Heart right ventricle (tissue), 16 donors: ENCODE measurements at regions of chr18 and their contacts with region 1.

Region 1: GRCh38 chr18:74353169-74353775 is 37.6 kb downstream of the C18orf63 start:
- DNase-seq: peak; percentile 23 to 78
- ATAC-seq: peak; percentile 87 to 94 (median 90)
- H3K4me3 ChIP-seq: no peak overlapping the region
- H3K27ac ChIP-seq: no peak overlapping the region
- H3K4me1 ChIP-seq: peaks cover 0 to 17% (median 5%) of the 10 kb centered on the region in 9 donors
- H3K27me3 ChIP-seq: peaks cover 0 to 3% (median 0%) of the 10 kb centered on the region in 7 donors
- CTCF ChIP-seq: peak; percentile 59 to 91 (median 82)

Region 2: DNA sequence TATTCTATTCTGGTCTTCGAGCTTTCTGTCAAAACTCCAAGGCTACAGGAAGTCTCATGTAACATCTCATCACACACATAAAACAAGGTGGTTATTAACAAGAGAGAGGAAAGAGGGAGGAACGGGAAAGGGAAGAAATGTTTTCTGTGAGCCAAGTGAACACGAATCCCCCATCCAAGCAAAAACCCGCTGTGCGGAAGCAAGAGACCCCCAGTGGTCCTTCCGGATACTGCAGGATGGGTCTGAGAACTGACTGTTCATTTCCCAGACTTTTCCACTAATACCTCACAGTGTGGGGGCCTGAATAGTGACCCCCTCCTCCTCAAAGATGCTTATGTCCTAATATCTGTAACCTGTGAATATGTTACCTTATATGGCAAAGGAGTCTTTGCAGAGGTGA is 122.9 kb after region 1 on chr18:
- intact Hi-C with region 1: loop called (anchors 1 to 5 kb)
- DNase-seq: peak; percentile 42 to 65
- ATAC-seq: peak in 5 of 8 donors; percentile 33 to 76 (median 64)
- H3K4me3 ChIP-seq: no peak overlapping the region
- H3K27ac ChIP-seq: no peak overlapping the region
- H3K4me1 ChIP-seq: peaks cover 0 to 25% (median 4%) of the 10 kb centered on the region in 9 donors
- H3K27me3 ChIP-seq: no peaks in the 10 kb centered on the region
- CTCF ChIP-seq: peak; percentile 68 to 87 (median 80)